ENCODE measurements at regions of chr13 and their contacts with region 1.

Region 1: DNA sequence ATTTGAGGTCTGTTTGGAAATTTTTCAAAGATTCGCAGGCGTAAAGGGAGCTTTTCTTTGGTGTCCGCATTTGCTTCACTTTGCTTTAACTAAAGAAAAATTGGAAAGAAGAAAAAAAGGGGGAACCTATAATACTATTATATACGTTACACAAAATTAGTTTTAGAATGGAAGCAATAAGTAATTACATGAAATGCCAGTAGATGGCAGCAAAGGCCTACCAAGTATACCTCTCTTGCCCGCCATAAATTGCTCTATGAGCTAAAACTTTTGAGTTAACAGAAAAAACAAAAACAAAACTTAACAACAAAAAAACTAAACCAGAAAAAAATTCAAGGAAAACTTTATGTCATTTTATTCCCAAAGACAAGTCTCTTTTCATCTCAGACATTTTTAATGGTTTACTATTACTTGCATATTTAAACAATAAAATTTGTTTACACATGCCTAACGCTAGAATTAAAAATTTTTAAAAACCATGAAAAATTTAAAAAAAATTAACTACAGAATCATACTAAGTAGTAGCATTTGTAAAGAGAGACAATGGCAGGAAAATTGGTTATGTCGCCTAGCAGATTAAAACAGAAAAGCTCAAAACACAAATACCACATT is 271.4 kb downstream of the NALCN start:
- DNase-seq: no peak
- H3K4me3 ChIP-seq: no peak overlapping the region
- H3K27ac ChIP-seq: no peak overlapping the region
- H3K4me1 ChIP-seq: peaks cover 4 to 8% of the 10 kb centered on the region in 2 donors
- H3K27me3 ChIP-seq: no peaks in the 10 kb centered on the region
- CTCF ChIP-seq: peak; percentile 37 to 83 (median 69)
- POLR2A ChIP-seq: no peak

Region 2: GRCh38 chr13:100922599-100922998 is 222.3 kb before region 1 on chr13:
- intact Hi-C with region 1: no loop called
- DNase-seq: no peak
- H3K4me3 ChIP-seq: no peak overlapping the region
- H3K27ac ChIP-seq: no peak overlapping the region
- H3K4me1 ChIP-seq: no peaks in the 10 kb centered on the region
- H3K27me3 ChIP-seq: no peaks in the 10 kb centered on the region
- CTCF ChIP-seq: no peak
- POLR2A ChIP-seq: no peak

Region 3: GRCh38 chr13:101492251-101492910 is 347.5 kb after region 1 on chr13:
- intact Hi-C with region 1: no loop called
- DNase-seq: no peak
- H3K4me3 ChIP-seq: no peak overlapping the region
- H3K27ac ChIP-seq: no peak overlapping the region
- H3K4me1 ChIP-seq: no peaks in the 10 kb centered on the region
- H3K27me3 ChIP-seq: no peaks in the 10 kb centered on the region
- CTCF ChIP-seq: no peak
- POLR2A ChIP-seq: no peak

Region 4: DNA sequence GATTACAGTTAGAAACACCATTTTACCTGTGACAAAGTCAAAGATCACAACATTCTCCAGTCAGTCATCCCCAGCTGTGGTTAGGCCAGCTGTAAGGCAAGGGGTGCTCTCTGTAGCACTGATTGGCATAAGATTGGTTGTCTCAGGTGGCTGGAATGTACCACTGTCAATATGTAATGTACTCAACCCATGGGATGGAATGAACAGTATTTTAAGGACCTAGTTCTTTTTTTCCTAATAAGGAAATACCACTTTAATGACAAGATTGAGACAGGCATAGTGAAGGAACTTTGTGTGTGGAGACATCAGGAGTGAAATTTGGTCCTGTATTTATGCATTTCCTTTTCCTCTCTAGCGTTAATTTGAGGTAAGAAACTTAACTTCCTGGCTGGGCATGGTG is 618.3 kb after region 1 on chr13:
- intact Hi-C with region 1: loop called (anchors 10 kb)
- DNase-seq: no peak
- H3K4me3 ChIP-seq: no peak overlapping the region
- H3K27ac ChIP-seq: no peak overlapping the region
- H3K4me1 ChIP-seq: no peaks in the 10 kb centered on the region
- H3K27me3 ChIP-seq: no peaks in the 10 kb centered on the region
- CTCF ChIP-seq: no peak
- POLR2A ChIP-seq: no peak